ENCODE measurements at regions of chr9 and their contacts with region 1.

Region 1: GRCh38 chr9:13088720-13089427 is 190.6 kb downstream of the MPDZ start:
- DNase-seq: no peak
- H3K4me3 ChIP-seq: no peak overlapping the region
- H3K27ac ChIP-seq: no peak overlapping the region
- H3K4me1 ChIP-seq: no peaks in the 10 kb centered on the region
- H3K27me3 ChIP-seq: no peaks in the 10 kb centered on the region
- CTCF ChIP-seq: peak; percentile 27 to 78 (median 54)
- EP300 ChIP-seq: no peak
- POLR2A ChIP-seq: no peak

Region 2: GRCh38 chr9:13033959-13034693 is 54.7 kb before region 1 on chr9:
- intact Hi-C with region 1: loop called (anchors 1 kb)
- DNase-seq: peak; percentile 81
- H3K4me3 ChIP-seq: peak overlapping the region in 3 of 4 donors; percentile 21 to 37 (median 30)
- H3K27ac ChIP-seq: peak overlapping the region in 1 of 4 donors; percentile 51
- H3K4me1 ChIP-seq: peaks cover 0 to 9% (median 0%) of the 10 kb centered on the region in 4 donors
- H3K27me3 ChIP-seq: no peaks in the 10 kb centered on the region
- CTCF ChIP-seq: peak; percentile 61 to 78 (median 72)
- EP300 ChIP-seq: no peak
- POLR2A ChIP-seq: no peak